ENCODE measurements at regions of chr13 and their contacts with region 1.

Region 1: DNA sequence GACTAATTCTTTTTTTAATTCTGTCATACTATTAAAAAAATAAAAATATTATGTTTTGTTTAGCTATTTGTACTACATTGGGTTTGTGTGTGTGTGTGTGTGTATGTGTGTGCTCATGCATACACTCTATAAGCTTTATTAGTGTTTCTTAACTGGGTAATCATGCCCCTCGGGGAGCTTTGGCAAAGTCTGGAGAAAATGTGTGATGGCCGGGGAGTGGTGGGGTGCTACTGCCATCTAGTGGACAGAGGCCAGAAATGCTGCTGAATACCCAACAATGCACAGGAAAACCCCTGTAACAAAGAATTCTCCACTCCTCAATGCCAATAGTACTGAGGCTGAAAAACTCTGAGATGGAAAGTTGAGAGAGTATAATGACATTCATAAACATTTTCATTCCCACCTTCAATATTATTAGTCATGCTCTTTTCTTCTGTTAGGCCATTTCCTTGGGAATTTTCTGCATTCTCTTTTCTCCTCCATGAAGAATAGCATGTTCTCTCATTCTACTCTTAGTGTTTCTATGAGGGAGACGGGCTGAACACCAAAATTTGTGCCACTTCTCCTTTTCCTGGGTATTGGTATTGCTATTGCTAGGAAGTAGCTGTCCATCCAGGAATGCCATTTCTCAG is 157.3 kb downstream of the DNAJC3 start:
- DNase-seq: peak; percentile 57
- ATAC-seq: peak; percentile 94
- H3K4me3 ChIP-seq: no peak overlapping the region
- H3K27ac ChIP-seq: no peak overlapping the region
- H3K4me1 ChIP-seq: no peaks in the 10 kb centered on the region
- H3K27me3 ChIP-seq: no peaks in the 10 kb centered on the region
- CTCF ChIP-seq: peak; percentile 96
- POLR2A ChIP-seq: no peak
- RAD21 ChIP-seq: peak; percentile 94

Region 2: DNA sequence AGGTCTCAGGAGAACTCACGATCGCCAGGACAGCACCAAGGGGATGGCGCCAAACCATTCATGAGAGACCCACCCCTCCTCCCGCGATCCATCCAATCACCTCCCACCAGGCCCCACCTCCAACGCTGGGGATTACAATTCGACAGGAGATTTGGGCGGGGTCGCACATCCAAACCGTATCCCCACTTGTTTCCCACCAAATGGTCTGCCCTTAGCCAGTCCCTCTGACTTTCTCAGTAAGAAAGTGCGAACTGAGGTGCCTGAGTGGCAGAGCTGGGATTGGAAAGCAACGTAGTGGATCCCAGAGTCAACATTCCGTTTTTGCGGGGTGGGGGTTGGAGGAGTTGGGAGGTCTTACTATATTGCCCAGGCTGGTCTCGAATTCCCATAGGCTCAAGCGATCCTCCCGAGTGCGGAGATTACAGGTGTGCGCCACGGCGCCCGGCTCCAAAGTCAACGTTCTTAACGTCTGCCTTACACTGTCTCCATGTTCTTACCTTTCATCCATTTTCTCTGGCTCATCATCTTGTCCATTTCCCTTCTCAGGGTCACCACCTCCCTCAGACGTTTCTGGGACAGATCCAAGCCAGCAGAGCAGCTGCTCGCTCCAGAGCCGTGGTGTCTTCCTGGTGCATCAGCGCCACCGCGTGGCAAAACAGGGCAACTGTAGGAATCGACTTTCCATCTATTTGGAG is 430.3 kb before region 1 on chr13:
- CTCF ChIA-PET with region 1: no interaction called
- POLR2A ChIA-PET with region 1: no interaction called
- dilution Hi-C with region 1: no loop called
- in situ Hi-C with region 1: no loop called
- intact Hi-C with region 1: loop called (anchors 2 kb)
- DNase-seq: peak; percentile 73
- ATAC-seq: peak; percentile 86
- H3K4me3 ChIP-seq: peak overlapping the region; percentile 41
- H3K27ac ChIP-seq: no peak overlapping the region
- H3K4me1 ChIP-seq: peaks cover 3% of the 10 kb centered on the region; the same call in 1 of the 2 replicates
- H3K27me3 ChIP-seq: no peaks in the 10 kb centered on the region; the same call in 1 of the 2 replicates
- CTCF ChIP-seq: peak; percentile 97
- POLR2A ChIP-seq: peak; percentile 50
- RAD21 ChIP-seq: peak; percentile 98

Region 3: DNA sequence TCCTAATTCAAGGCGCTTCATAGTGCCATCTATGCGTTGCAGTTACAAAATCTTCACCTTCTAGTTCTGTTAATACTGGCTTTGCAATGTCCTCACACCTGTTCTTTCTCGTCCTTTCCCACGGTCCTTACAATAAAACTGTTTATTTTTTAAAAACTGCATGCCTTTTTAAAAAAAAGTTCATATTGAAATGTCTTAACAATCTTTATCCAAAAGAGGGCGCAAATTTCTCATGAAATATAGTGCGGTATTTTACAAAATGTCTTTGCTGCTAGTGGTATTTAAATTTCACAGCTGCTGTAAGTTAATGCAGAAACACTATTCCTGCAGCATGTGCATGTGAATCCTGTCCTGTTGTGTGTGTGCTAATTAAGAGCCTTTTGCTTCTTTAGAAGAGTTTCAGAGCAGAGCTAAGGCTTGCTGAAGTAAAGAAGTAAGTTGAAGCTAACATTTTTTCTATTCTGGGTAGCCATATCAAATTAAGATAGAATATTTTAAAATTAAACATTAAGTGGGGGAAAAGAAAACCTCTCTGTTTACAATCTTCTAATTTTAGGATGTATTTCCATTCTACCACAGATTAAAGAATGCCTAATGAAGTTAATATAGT is 297.5 kb before region 1 on chr13:
- CTCF ChIA-PET with region 1: interaction called, 12 read pairs
- POLR2A ChIA-PET with region 1: no interaction called
- dilution Hi-C with region 1: no loop called
- in situ Hi-C with region 1: no loop called
- intact Hi-C with region 1: loop called (anchors 1 kb)
- DNase-seq: peak; percentile 39
- ATAC-seq: peak; percentile 56; the same call in 1 of the 2 replicates
- H3K4me3 ChIP-seq: no peak overlapping the region
- H3K27ac ChIP-seq: no peak overlapping the region
- H3K4me1 ChIP-seq: peaks cover 2% of the 10 kb centered on the region; the same call in 1 of the 2 replicates
- H3K27me3 ChIP-seq: peaks cover 17% of the 10 kb centered on the region
- CTCF ChIP-seq: peak; percentile 53
- POLR2A ChIP-seq: no peak
- RAD21 ChIP-seq: no peak; the same call in 1 of the 2 replicates

Region 4: GRCh38 chr13:95624020-95624419 is 210.2 kb before region 1 on chr13:
- CTCF ChIA-PET with region 1: interaction called, 8 read pairs
- POLR2A ChIA-PET with region 1: no interaction called
- dilution Hi-C with region 1: no loop called
- in situ Hi-C with region 1: loop called (anchors 10 kb)
- intact Hi-C with region 1: loop called (anchors 1 kb)
- DNase-seq: peak; percentile 64
- ATAC-seq: peak; percentile 48; the same call in 1 of the 2 replicates
- H3K4me3 ChIP-seq: no peak overlapping the region
- H3K27ac ChIP-seq: no peak overlapping the region
- H3K4me1 ChIP-seq: peaks cover under 1% of the 10 kb centered on the region; the same call in 1 of the 2 replicates
- H3K27me3 ChIP-seq: no peaks in the 10 kb centered on the region
- CTCF ChIP-seq: peak; percentile 70
- POLR2A ChIP-seq: no peak
- RAD21 ChIP-seq: peak; percentile 83

Region 5: GRCh38 chr13:95660981-95661581 is 173.2 kb before region 1 on chr13:
- CTCF ChIA-PET with region 1: interaction called, 3 read pairs
- POLR2A ChIA-PET with region 1: no interaction called
- dilution Hi-C with region 1: no loop called
- in situ Hi-C with region 1: no loop called
- intact Hi-C with region 1: loop called (anchors 1 kb)
- DNase-seq: peak; percentile 50
- ATAC-seq: peak; percentile 40; the same call in 1 of the 2 replicates
- H3K4me3 ChIP-seq: no peak overlapping the region
- H3K27ac ChIP-seq: no peak overlapping the region
- H3K4me1 ChIP-seq: no peaks in the 10 kb centered on the region
- H3K27me3 ChIP-seq: peaks cover 4% of the 10 kb centered on the region; the same call in 1 of the 2 replicates
- CTCF ChIP-seq: peak; percentile 67
- POLR2A ChIP-seq: no peak
- RAD21 ChIP-seq: peak; percentile 65

Measured in IMR-90 (cell line).